ENCODE measurements at regions of chr19 and their contacts with region 1.

Region 1: GRCh38 chr19:36665832-36666231 is 805 bp downstream of the ZNF461 start:
- DNase-seq: no peak
- ATAC-seq: no peak
- H3K4me3 Mint-ChIP-seq: peak overlapping the region; percentile 98
- H3K27ac Mint-ChIP-seq: peak overlapping the region; percentile 99
- H3K4me1 Mint-ChIP-seq: peaks cover 26% of the 10 kb centered on the region
- H3K27me3 Mint-ChIP-seq: no peaks in the 10 kb centered on the region

Region 2: GRCh38 chr19:36605101-36605876 is 60.5 kb before region 1 on chr19 and contains the start of gene ZNF382:
- CTCF ChIA-PET with region 1: no interaction called
- POLR2A ChIA-PET with region 1: interaction called, 7 read pairs
- intact Hi-C with region 1: loop called (anchors 1 to 2 kb)
- DNase-seq: peak; percentile 94
- ATAC-seq: peak; percentile 86
- H3K4me3 Mint-ChIP-seq: peak within 1 kb of the TSS; percentile 81
- H3K27ac Mint-ChIP-seq: peak within 1 kb of the TSS; percentile 91
- H3K4me1 Mint-ChIP-seq: peaks cover 20% of the 10 kb centered on the region
- H3K27me3 Mint-ChIP-seq: no peaks in the 10 kb centered on the region
- total RNA-seq, gene ZNF382: 14.9 to 20.0 TPM

Region 3: GRCh38 chr19:36850559-36851442 is 185.0 kb after region 1 on chr19 and contains the start of gene ZNF345:
- CTCF ChIA-PET with region 1: interaction called, 3 read pairs
- POLR2A ChIA-PET with region 1: interaction called, 3 read pairs
- intact Hi-C with region 1: loop called in 1 of 2 experiments (anchors 1 kb)
- DNase-seq: peak; percentile 91
- ATAC-seq: peak; percentile 82
- H3K4me3 Mint-ChIP-seq: no peak within 1 kb of the TSS
- H3K27ac Mint-ChIP-seq: no peak within 1 kb of the TSS
- H3K4me1 Mint-ChIP-seq: peaks cover 10% of the 10 kb centered on the region
- H3K27me3 Mint-ChIP-seq: no peaks in the 10 kb centered on the region
- total RNA-seq, gene ZNF345: 3.5 to 4.6 TPM

Region 4: DNA sequence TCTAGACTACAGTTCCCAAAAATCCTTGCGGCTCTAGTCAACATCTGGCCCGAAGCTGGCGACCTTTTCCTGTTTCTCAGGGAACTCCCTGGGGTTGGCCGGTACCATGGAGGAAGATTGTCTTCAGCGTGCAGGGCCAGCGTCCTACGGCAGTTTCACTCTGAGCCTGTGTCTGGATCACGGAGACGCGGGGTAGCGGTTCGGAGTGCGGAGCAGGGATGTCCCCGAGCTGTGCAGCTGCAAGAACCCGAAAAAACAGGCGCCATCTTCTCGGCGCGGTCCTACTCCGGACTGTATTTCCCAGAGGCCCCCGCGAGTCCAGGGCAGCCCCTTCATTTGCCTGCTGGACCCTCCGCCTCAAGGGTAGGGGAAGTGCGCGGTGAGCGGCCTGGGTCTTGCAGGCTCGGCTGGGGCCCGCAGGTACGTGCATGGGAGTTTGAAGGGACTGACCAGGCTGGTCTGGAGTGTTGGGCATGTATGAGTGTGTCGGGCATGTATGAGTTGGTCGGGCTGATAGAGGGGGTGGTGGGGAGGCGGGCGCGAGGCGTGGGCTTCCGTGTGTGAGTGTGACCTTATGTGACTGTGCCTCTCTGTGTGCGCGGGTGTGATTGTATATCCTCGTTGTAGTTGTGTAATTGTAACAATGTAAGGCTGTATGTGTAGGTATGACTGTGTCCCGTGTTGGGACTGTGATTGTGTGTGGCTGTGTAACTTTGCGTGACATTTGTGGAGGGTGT is 552.2 kb after region 1 on chr19 and contains the start of gene ZNF383:
- CTCF ChIA-PET with region 1: no interaction called
- POLR2A ChIA-PET with region 1: no interaction called
- intact Hi-C with region 1: loop called in 1 of 2 experiments (anchors 5 kb)
- DNase-seq: peak; percentile 89
- ATAC-seq: peak; percentile 87
- H3K4me3 Mint-ChIP-seq: peak within 1 kb of the TSS; percentile 93
- H3K27ac Mint-ChIP-seq: peak within 1 kb of the TSS; percentile 99
- H3K4me1 Mint-ChIP-seq: peaks cover 24% of the 10 kb centered on the region
- H3K27me3 Mint-ChIP-seq: no peaks in the 10 kb centered on the region
- total RNA-seq, gene ZNF383: 8.5 to 9.2 TPM

Measured in activated CD4-positive, alpha-beta T cell treated with anti-CD3 and anti-CD28 coated beads for 36 hours (primary cell).